ENCODE measurements at regions of chr17 and their contacts with region 1.

Region 1: GRCh38 chr17:63950941-63951507 is 18.9 kb upstream of the CD79B start:
- DNase-seq: no peak
- ATAC-seq: no peak

Region 2: DNA sequence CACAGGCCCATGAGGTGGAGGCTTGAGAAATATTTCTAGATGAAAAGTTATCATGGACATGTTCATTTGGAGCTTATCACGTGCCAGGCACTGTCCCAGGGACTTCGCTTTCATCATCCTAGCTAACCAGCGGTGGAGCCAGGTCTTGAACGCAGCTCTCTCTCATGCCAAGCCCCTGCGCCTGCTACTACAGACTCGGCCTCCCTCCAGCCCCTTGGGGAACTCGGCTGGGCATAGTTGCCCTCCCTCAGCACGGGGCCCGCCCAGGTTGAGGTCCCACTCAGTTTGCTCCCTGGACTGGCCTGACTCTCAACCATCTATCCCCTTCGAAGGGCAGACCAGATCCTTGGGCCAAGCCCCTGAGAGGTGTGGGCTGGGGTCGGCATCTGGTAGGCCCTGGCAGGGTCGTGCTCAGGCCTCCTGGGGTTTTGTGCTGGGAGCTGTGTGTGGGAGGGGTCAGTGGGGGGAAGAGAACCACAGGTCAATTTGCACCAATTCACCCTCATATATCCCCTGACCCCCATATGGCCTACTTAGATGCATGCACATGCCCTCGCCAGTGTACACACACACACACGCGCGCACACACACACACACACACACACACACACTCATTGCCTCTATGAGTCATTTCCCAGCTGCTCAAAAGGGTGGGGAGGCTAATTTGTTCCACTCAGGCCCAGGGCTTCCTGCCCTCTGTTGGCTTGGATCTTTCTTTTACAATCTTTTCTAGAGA is 33.8 kb after region 1 on chr17:
- intact Hi-C with region 1: loop called in 1 of 2 experiments (anchors 5 kb)
- DNase-seq: peak; percentile 70
- ATAC-seq: peak; percentile 45 to 77

Region 3: DNA sequence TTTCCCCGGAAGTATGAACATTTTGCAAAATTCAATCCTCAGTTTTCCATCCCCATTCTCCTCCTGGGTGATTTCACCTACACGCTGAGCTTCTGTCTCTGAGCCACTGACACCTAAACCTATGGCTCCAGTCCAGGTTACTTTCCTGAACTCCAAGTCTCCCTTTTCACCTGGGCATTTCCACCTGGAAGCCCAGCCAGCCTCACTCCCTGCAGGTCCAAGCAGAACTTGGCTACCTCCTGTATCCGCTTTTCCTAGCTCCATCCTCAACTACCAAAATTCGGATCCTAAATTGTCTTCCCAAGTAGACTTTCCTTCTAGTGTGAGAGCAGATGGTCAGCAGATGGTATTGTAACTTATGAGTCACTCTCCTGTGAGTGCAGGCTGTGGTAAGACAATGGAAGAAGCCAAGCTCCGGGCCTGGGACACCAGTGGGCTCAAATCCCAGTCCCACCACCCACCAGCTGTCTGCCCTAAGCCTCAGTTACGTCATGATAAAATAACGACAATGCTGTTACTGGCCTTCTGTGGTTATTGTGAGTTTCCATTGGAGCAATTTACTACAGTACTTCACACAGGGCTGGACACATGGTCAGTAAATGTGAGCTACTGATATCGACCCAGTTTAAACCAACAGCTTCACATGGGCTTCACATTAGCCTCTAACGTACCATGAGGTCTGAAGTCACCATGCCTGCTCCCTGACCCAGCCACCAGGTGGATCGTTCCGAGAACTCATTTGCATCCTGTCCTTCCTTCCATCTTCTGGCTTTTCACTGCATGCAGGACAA is 406.4 kb after region 1 on chr17:
- intact Hi-C with region 1: no loop called
- DNase-seq: peak; percentile 75
- ATAC-seq: peak; percentile 82 to 89

Measured in left cardiac atrium (tissue), 4 donors.